ENCODE measurements at regions of chr3 and their contacts with region 1.

Region 1: DNA sequence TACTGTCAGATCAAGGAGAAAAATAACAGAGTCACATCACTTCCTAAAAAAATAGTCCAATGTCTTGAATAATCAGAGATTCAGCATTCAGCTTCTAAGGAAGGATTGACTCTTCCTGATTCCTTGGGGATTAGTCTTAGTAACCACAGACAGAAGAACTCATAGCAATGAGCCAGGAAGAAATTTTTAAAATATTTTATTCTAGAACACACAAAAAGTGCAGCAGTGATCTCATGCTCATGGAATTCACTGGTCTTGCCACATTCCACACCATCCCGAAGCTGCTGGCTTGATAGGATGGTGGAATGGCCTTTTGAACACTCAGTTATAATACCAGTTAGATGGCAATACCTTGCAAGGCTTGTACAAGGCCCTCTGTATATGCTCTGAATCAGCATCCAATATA is 43.0 kb upstream of the ABI3BP start:
- DNase-seq: peak; percentile 91
- H3K4me3 ChIP-seq: no peak overlapping the region
- H3K27ac ChIP-seq: peak overlapping the region; percentile 82
- H3K4me1 ChIP-seq: peaks cover 31% of the 10 kb centered on the region
- H3K27me3 ChIP-seq: no peaks in the 10 kb centered on the region
- CTCF ChIP-seq: no peak

Region 2: GRCh38 chr3:101065962-101066361 is 29.7 kb after region 1 on chr3:
- CTCF ChIA-PET with region 1: no interaction called
- dilution Hi-C with region 1: no loop called
- in situ Hi-C with region 1: no loop called
- intact Hi-C with region 1: loop called (anchors 2 kb)
- DNase-seq: peak; percentile 90
- H3K4me3 ChIP-seq: no peak overlapping the region
- H3K27ac ChIP-seq: peak overlapping the region; percentile 81
- H3K4me1 ChIP-seq: peaks cover 28% of the 10 kb centered on the region
- H3K27me3 ChIP-seq: no peaks in the 10 kb centered on the region
- CTCF ChIP-seq: no peak

Region 3: GRCh38 chr3:101143012-101143411 is 106.8 kb after region 1 on chr3:
- CTCF ChIA-PET with region 1: no interaction called
- dilution Hi-C with region 1: no loop called
- in situ Hi-C with region 1: no loop called
- intact Hi-C with region 1: no loop called
- DNase-seq: no peak
- H3K4me3 ChIP-seq: no peak overlapping the region
- H3K27ac ChIP-seq: no peak overlapping the region
- H3K4me1 ChIP-seq: no peaks in the 10 kb centered on the region
- H3K27me3 ChIP-seq: no peaks in the 10 kb centered on the region
- CTCF ChIP-seq: no peak

Region 4: DNA sequence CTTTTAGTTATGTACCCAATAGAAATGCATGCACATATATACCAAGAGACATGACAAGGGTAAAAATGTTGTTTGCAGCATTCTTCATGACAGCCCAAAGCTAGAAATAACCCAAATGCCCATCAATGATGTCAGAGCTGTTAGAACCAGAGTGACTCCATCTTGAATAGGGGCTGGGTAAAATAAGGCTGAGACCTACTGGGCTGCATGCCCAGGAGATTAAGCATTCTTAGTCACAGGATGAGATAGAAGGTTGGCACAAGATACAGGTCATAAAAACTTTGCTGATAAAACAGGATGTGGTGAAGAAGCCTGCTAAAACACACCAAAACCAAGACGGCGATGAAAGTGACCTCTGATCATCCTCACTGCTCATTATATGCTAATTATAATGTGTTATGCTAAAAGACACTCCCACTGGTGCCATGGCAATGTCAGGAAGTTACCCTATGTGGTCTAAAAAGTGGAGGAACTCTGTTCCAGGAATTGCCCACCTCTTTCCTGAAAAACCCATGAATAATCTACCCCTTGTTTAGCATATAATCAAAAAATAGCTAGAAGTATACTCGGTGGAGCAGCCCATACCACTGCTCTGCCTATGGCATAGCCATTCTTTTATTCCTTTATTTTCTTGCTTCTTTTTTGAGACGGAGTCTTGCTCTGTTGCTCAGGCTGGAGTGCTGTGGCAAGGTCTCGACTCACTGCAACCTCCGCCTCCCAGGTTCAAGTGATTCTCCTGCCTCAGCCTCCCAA is 607.8 kb after region 1 on chr3:
- CTCF ChIA-PET with region 1: no interaction called
- dilution Hi-C with region 1: no loop called
- in situ Hi-C with region 1: no loop called
- intact Hi-C with region 1: no loop called
- DNase-seq: peak; percentile 78
- H3K4me3 ChIP-seq: no peak overlapping the region
- H3K27ac ChIP-seq: no peak overlapping the region
- H3K4me1 ChIP-seq: peaks cover 23% of the 10 kb centered on the region
- H3K27me3 ChIP-seq: no peaks in the 10 kb centered on the region
- CTCF ChIP-seq: no peak